HepG2 (cell line): ENCODE measurements at regions of chr15 and their contacts with region 1.

Region 1: GRCh38 chr15:68053701-68054627 is at the start of gene PIAS1:
- DNase-seq: peak; percentile 89
- ATAC-seq: peak; percentile 91
- H3K4me3 ChIP-seq: peak within 1 kb of the TSS; percentile 87 to 100 (median 94)
- H3K27ac ChIP-seq: peak within 1 kb of the TSS; percentile 94
- H3K4me1 ChIP-seq: peaks cover 51% of the 10 kb centered on the region
- H3K27me3 ChIP-seq: no peaks in the 10 kb centered on the region
- CTCF ChIP-seq: no peak
- EP300 ChIP-seq: peak in 1 of 2 experiments; percentile 46; a peak in 1 of 4 replicates
- POLR2A ChIP-seq: peak; percentile 80 to 85
- RAD21 ChIP-seq: no peak; the same call in 1 of the 2 replicates
- total RNA-seq, gene PIAS1: 20.7 and 23.2 TPM in 2 replicates

Region 2: DNA sequence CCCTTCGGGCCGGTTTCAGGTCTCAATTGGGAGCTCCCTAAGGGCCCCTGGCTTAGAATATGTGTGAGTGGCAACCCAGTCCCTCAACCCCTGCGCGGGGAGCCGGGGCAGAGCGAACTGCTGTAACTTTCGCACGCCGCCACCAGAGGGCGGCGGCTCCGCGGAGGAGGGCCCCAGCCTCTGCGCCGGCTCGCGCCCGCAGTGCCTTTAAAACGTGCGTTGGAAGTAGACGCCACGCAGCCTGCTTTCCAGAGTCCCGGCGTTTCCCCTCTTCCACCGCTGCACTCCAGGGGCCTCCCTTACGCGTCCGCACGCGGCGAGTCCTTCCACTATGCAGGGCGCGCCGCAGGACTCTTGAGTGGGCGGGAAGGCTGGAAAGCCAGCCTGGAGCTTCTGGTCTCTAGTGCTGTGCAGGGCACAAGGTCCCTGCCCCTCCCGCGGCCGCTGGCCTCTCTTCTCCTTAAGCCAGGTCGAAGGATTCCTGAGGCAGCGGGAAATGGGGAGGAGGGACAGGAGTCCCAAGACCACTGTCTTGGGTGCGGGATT is 190.4 kb before region 1 on chr15:
- CTCF ChIA-PET with region 1: no interaction called
- POLR2A ChIA-PET with region 1: no interaction called
- in situ Hi-C with region 1: loop called (anchors 5 kb)
- intact Hi-C with region 1: loop called (anchors 1 kb)
- DNase-seq: peak; percentile 66
- ATAC-seq: peak; percentile 98
- H3K4me3 ChIP-seq: peak overlapping the region; percentile 41 to 74 (median 46); a peak in 5 of 6 replicates
- H3K27ac ChIP-seq: peak overlapping the region; percentile 53
- H3K4me1 ChIP-seq: peaks cover 34% of the 10 kb centered on the region
- H3K27me3 ChIP-seq: no peaks in the 10 kb centered on the region
- CTCF ChIP-seq: peak; percentile 97
- EP300 ChIP-seq: 0 out of 4 replicates have a peak, but pooled peaks of 1 of the 2 experiments have one; percentile 19
- POLR2A ChIP-seq: no peak; a peak in 1 of 4 replicates
- RAD21 ChIP-seq: peak; percentile 99

Region 3: GRCh38 chr15:67914537-67915460 is 139.2 kb before region 1 on chr15:
- CTCF ChIA-PET with region 1: no interaction called
- POLR2A ChIA-PET with region 1: interaction called, 19 read pairs
- in situ Hi-C with region 1: no loop called
- intact Hi-C with region 1: no loop called
- DNase-seq: peak; percentile 65
- ATAC-seq: peak; percentile 73
- H3K4me3 ChIP-seq: peak overlapping the region; percentile 19 to 51 (median 35)
- H3K27ac ChIP-seq: peak overlapping the region; percentile 89
- H3K4me1 ChIP-seq: peaks cover 75% of the 10 kb centered on the region
- H3K27me3 ChIP-seq: no peaks in the 10 kb centered on the region
- CTCF ChIP-seq: no peak
- EP300 ChIP-seq: no peak
- POLR2A ChIP-seq: no peak; a peak in 1 of 4 replicates
- RAD21 ChIP-seq: no peak

Region 4: GRCh38 chr15:68098465-68098864 is 44.5 kb after region 1 on chr15:
- CTCF ChIA-PET with region 1: no interaction called
- POLR2A ChIA-PET with region 1: no interaction called
- in situ Hi-C with region 1: no loop called
- intact Hi-C with region 1: loop called (anchors 2 kb)
- DNase-seq: no peak
- ATAC-seq: no peak
- H3K4me3 ChIP-seq: no peak overlapping the region
- H3K27ac ChIP-seq: no peak overlapping the region
- H3K4me1 ChIP-seq: peaks cover 11% of the 10 kb centered on the region
- H3K27me3 ChIP-seq: no peaks in the 10 kb centered on the region; a peak in 1 of 5 replicates
- CTCF ChIP-seq: no peak
- EP300 ChIP-seq: no peak
- POLR2A ChIP-seq: no peak
- RAD21 ChIP-seq: no peak

Region 5: DNA sequence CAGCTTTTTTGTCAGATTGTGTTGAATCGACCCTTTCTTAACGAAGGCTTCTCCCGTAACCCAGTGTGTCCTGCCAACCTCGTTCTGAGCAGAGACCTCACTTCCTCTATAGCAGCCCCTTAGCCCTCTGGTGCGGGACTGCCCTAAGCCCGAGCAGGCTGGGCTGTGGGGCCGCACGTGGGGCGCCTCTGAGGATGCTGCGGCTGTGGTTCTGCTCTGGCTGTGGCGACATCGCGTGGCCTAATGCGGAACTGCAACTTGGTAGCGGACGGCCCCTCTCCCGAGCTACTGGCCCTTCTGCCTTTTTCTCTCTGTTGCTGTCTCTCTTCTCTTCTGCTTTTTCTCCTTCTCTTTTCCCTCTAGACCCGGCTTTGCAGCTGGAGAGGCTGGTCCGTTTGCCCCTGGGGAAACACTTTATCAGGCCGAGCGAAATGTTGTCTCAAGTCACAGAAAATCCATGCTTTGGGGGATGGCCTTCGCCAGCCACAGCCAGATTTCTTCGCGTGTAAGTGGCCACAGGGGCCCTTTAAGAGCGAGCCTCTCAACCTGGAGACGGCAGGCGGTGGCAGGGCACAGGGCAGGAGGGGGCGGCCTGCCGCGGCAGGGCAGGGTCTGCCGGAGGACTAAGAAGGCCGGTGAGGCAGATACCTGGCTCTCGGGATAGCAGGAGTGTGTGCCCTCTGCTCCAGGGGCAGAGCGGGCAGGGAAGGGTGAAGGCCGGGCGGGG is 1340.8 kb after region 1 on chr15:
- CTCF ChIA-PET with region 1: no interaction called
- POLR2A ChIA-PET with region 1: no interaction called
- in situ Hi-C with region 1: no loop called
- intact Hi-C with region 1: loop called (anchors 5 kb)
- DNase-seq: peak; percentile 31
- ATAC-seq: peak; percentile 92
- H3K4me3 ChIP-seq: no peak overlapping the region; a peak in 1 of 6 replicates
- H3K27ac ChIP-seq: no peak overlapping the region
- H3K4me1 ChIP-seq: peaks cover 26% of the 10 kb centered on the region
- H3K27me3 ChIP-seq: peaks cover 2 to 22% of the 10 kb centered on the region in 2 experiments; a peak in 4 of 5 replicates
- CTCF ChIP-seq: peak; percentile 94
- EP300 ChIP-seq: no peak
- POLR2A ChIP-seq: no peak
- RAD21 ChIP-seq: peak; percentile 85